B cell (primary cell): ENCODE measurements at regions of chr6 and their contacts with region 1.

Region 1: DNA sequence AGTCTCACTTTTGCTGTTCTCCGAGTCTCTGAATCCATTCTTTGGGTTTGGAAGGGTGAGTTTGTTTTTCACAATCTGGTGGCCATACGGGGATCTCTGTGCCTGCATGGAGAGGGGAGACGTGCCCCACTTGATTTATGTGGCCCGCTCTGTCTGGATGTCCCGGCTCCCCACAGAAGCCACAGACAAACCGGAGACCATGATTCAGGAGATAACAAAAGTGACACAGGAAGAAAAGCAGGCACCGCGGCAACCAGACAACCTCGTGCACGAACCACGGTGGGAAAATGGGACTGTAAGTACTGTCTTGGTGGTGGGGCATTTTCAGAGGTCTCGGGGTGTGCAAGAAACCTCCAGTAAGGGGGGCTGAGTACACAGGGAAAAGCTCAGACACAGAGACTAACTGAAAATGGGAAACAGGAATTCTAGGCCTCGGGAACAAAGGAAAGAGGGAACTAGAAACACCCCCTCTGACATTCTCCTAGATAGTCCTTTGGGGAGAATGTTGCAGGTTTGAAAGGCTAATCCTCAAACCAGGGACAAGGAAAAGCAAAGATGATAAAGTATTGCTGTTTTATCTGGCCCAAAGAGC is 22.1 kb upstream of the ZNF318 start:
- DNase-seq: no peak
- ATAC-seq: no peak
- H3K4me3 ChIP-seq: no peak overlapping the region
- H3K4me3 Mint-ChIP-seq: peak overlapping the region; percentile 20
- H3K27ac ChIP-seq: no peak overlapping the region
- H3K27ac Mint-ChIP-seq: no peak overlapping the region
- H3K4me1 ChIP-seq: peaks cover 22 to 23% of the 10 kb centered on the region in 2 donors
- H3K4me1 Mint-ChIP-seq: peaks cover 25% of the 10 kb centered on the region
- H3K27me3 ChIP-seq: peaks cover 0 to 13% (median 7%) of the 10 kb centered on the region in 4 experiments
- H3K27me3 Mint-ChIP-seq: peaks cover 16% of the 10 kb centered on the region
- CTCF ChIP-seq: no peak

Region 2: DNA sequence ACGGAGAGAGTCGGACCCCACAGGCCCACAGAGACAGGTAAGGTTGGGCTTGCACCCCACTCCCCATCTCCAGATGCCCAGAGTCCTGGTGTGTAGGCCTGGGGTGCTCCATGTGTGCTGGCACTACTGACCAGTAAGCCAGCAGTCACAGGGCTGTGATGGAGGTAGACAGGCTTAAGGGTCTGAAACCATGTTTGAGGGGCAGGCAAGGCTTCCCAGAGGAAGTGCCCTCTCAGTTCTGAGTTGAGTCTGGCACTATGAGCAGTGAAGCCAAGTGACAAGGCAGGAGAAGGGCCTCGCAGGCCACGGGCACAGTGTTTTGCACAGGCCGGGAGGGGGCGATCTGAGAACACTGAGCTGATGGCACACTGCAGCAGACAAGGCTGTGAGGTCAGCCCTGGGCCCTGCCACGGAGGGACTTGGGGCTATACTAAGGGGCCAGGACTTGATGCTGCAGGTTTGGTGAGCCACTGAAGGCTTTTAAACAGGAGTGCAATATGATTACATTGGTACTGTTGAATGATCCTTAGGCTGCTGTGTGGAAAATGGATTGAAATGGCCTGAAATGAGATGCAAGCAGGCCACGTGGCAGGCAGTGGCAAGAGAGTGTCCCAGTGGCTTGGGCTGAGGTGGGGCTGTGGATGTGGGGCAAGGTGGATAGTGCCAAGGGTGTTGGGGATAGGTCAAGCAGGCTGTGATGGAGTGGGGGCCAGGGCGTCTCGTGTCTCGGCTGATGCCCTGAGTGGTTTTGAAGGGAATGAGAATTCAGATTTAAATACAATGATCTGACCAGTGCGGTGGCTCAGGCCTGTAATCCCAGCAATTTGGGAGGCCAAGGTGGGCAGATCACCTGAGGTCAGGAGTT is 128.0 kb before region 1 on chr6:
- CTCF ChIA-PET with region 1: interaction called, 73 read pairs
- POLR2A ChIA-PET with region 1: no interaction called
- intact Hi-C with region 1: no loop called
- DNase-seq: peak; percentile 84
- ATAC-seq: peak; percentile 98
- H3K4me3 ChIP-seq: no peak overlapping the region
- H3K4me3 Mint-ChIP-seq: no peak overlapping the region
- H3K27ac ChIP-seq: no peak overlapping the region
- H3K27ac Mint-ChIP-seq: no peak overlapping the region
- H3K4me1 ChIP-seq: no peaks in the 10 kb centered on the region
- H3K4me1 Mint-ChIP-seq: peaks cover 8% of the 10 kb centered on the region
- H3K27me3 ChIP-seq: peaks cover 0 to under 1% (median 0%) of the 10 kb centered on the region in 4 experiments
- H3K27me3 Mint-ChIP-seq: peaks cover 4% of the 10 kb centered on the region
- CTCF ChIP-seq: peak; percentile 84

Region 3: DNA sequence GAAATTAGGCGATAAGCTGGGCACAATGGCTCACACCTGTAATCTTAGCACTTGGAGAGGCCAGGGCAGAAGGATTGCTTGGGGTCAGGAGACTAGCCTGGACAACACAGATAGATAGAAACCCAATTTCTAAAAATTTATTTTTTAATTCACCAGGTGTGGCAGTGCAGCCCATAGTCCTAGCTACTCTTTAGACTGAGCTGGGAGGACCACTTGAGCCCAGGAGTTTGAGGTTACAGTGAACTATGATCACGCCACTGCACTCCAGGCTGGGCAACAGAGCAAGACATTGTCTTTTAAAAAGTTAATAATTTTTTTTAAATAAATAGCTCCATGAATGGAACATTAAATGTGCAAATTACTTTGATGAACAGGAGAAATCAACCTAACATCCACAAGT is 30.3 kb before region 1 on chr6:
- CTCF ChIA-PET with region 1: interaction called, 45 read pairs
- POLR2A ChIA-PET with region 1: interaction called, 3 read pairs
- intact Hi-C with region 1: no loop called
- DNase-seq: no peak
- ATAC-seq: peak; percentile 41
- H3K4me3 ChIP-seq: no peak overlapping the region
- H3K4me3 Mint-ChIP-seq: no peak overlapping the region
- H3K27ac ChIP-seq: peak overlapping the region in 1 of 2 donors; percentile 41
- H3K27ac Mint-ChIP-seq: peak overlapping the region; percentile 20
- H3K4me1 ChIP-seq: peaks cover 32 to 36% of the 10 kb centered on the region in 2 donors
- H3K4me1 Mint-ChIP-seq: peaks cover 50% of the 10 kb centered on the region
- H3K27me3 ChIP-seq: no peaks in the 10 kb centered on the region
- H3K27me3 Mint-ChIP-seq: no peaks in the 10 kb centered on the region
- CTCF ChIP-seq: no peak